Heart right ventricle (tissue), 16 donors: ENCODE measurements at regions of chr17 and their contacts with region 1.

Region 1: DNA sequence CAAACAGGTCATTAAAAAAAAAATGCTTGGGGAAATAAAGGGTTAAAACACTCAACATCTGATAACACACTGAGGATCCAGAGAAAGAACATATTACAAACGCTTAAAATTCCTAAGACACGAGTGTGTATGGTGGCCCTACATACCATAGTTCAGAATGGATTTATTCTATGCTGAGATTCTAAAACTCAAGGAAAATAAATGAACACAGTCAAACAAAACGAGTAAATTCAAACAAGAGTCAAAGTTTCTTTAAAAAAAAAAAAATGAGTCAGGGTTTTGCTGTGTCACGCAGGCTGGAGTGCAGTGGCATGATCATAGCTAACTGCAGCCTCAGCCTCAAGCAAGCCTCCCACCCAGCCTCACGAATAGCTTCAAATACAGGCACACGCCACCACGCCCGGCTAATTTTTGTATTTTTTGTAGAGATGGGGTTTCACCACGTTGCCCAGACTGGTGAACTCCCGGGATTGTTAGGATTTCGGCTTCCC is 17.4 kb downstream of the CRK start:
- DNase-seq: no peak
- ATAC-seq: no peak
- H3K4me3 ChIP-seq: no peak overlapping the region
- H3K27ac ChIP-seq: peak overlapping the region in 3 of 10 donors; percentile 9 to 27 (median 15)
- H3K4me1 ChIP-seq: peaks cover 0 to 40% (median 20%) of the 10 kb centered on the region in 9 donors
- H3K27me3 ChIP-seq: no peaks in the 10 kb centered on the region
- CTCF ChIP-seq: no peak

Region 2: DNA sequence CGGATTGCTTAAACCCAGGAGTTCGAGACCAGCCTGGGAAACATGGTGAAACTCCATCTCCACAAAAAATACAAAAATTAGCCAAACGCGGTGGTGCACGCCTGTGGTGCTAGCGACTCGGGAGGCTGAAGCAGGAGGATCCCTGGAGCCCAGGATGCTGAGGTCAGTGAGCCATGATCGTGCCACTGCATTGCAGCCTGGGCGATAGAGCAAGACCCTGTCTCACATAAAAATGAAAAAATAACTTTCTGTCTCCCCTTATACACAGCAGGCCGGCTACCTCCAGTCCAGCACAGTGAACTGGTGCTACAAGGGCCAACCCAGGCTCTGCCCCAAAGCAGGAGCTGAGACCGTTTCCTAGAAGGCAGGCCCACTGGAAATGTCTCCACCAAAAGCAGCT is 98.3 kb before region 1 on chr17:
- intact Hi-C with region 1: no loop called
- DNase-seq: no peak
- ATAC-seq: no peak
- H3K4me3 ChIP-seq: no peak overlapping the region
- H3K27ac ChIP-seq: no peak overlapping the region
- H3K4me1 ChIP-seq: peaks cover 0 to 29% (median 8%) of the 10 kb centered on the region in 9 donors
- H3K27me3 ChIP-seq: no peaks in the 10 kb centered on the region
- CTCF ChIP-seq: no peak

Region 3: GRCh38 chr17:1379930-1380313 is 58.7 kb before region 1 on chr17:
- intact Hi-C with region 1: loop called in 1 of 10 experiments (anchors 10 kb)
- DNase-seq: no peak
- ATAC-seq: peak in 2 of 8 donors; percentile 23 to 40
- H3K4me3 ChIP-seq: no peak overlapping the region
- H3K27ac ChIP-seq: peak overlapping the region in 5 of 10 donors; percentile 27 to 64 (median 28)
- H3K4me1 ChIP-seq: peaks cover 32 to 99% (median 91%) of the 10 kb centered on the region in 9 donors
- H3K27me3 ChIP-seq: no peaks in the 10 kb centered on the region
- CTCF ChIP-seq: no peak

Region 4: DNA sequence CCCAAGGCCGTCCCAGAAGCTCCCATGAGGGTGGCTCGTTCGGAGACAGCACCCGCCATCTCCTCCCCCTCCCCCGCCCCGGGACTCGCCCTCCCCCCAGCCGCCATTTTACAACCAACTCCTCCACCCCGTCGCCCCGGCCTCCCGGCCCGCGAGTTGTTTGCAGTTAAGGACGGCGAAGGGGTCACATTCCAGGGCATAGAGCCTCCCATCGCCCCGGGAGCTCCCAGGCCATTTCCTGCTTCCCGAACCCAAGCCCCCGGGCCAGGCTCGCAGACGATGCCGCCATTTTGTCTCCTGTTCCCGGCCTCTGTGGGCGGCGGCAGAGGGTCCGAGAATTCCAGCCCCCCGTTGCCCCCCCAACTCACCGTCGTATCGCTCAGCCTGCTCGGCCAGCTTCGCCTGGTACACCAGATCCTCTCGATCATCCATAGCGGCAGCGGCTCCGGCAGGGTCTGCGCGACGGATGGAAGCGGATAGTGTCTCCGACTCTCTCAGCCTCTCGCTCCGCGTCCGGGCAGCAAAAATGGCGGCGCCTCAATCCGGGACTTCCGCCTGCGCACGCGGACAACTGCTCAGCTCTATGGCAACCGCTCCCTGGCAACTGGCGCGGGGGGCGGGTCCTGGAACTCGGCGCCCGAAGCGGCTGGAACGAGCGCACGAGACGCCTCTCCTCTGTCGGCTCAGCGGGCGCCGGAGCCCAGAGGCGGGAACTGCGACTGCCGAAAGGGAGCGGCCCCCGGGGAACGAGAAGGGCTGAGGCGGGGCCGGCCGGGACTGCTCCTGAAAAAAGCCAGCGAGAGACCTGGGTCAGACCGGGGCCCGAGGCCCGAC is 38.7 kb before region 1 on chr17 and contains the start of gene YWHAE:
- intact Hi-C with region 1: loop called in 1 of 10 experiments (anchors 5 kb)
- DNase-seq: peak; percentile 98
- ATAC-seq: peak; percentile 97 to 98 (median 98)
- H3K4me3 ChIP-seq: peak within 1 kb of the TSS; percentile 67 to 94 (median 80)
- H3K27ac ChIP-seq: peak within 1 kb of the TSS; percentile 90 to 97 (median 96)
- H3K4me1 ChIP-seq: peaks cover 5 to 49% (median 42%) of the 10 kb centered on the region in 9 donors
- H3K27me3 ChIP-seq: no peaks in the 10 kb centered on the region
- CTCF ChIP-seq: no peak
- total RNA-seq, gene YWHAE: 600 to 791 (median 620) TPM

Region 5: GRCh38 chr17:1532836-1533602 is 94.4 kb after region 1 on chr17:
- intact Hi-C with region 1: no loop called
- DNase-seq: no peak
- ATAC-seq: peak in 7 of 8 donors; percentile 49 to 81 (median 72)
- H3K4me3 ChIP-seq: no peak overlapping the region
- H3K27ac ChIP-seq: peak overlapping the region; percentile 20 to 79 (median 47)
- H3K4me1 ChIP-seq: peaks cover 0 to 18% (median 5%) of the 10 kb centered on the region in 9 donors
- H3K27me3 ChIP-seq: no peaks in the 10 kb centered on the region
- CTCF ChIP-seq: peak in 7 of 9 donors; percentile 26 to 55 (median 44)

Region 6: DNA sequence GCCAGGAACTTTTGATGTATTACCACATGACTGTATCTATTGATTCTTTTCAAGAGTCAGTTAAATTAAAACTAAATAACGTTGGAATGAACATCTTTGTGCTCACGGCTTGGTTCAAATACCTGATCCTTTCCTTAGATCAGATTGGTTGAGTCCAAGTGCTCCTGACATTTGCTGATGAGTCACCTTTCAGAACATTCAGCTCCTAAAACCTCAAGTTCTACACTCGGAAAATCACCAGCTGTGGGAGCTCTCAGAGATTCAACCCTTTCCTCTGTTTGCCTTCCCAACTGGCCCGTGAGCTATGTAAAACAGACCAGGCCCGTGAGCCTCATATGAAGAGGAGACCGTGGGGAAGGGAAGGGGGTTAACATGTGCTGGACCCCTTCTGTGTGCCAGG is 518.4 kb after region 1 on chr17:
- intact Hi-C with region 1: no loop called
- DNase-seq: no peak
- ATAC-seq: no peak
- H3K4me3 ChIP-seq: no peak overlapping the region
- H3K27ac ChIP-seq: no peak overlapping the region
- H3K4me1 ChIP-seq: peaks cover 0 to 13% (median 0%) of the 10 kb centered on the region in 9 donors
- H3K27me3 ChIP-seq: no peaks in the 10 kb centered on the region
- CTCF ChIP-seq: no peak